ENCODE measurements at regions of chr20 and their contacts with region 1.

Region 1: GRCh38 chr20:4763723-4764510 is 42.2 kb downstream of the PRND start:
- DNase-seq: no peak
- ATAC-seq: no peak
- H3K4me3 Mint-ChIP-seq: no peak overlapping the region
- H3K27ac Mint-ChIP-seq: no peak overlapping the region
- H3K4me1 Mint-ChIP-seq: peaks cover 5% of the 10 kb centered on the region
- H3K27me3 Mint-ChIP-seq: peaks cover 2% of the 10 kb centered on the region

Region 2: DNA sequence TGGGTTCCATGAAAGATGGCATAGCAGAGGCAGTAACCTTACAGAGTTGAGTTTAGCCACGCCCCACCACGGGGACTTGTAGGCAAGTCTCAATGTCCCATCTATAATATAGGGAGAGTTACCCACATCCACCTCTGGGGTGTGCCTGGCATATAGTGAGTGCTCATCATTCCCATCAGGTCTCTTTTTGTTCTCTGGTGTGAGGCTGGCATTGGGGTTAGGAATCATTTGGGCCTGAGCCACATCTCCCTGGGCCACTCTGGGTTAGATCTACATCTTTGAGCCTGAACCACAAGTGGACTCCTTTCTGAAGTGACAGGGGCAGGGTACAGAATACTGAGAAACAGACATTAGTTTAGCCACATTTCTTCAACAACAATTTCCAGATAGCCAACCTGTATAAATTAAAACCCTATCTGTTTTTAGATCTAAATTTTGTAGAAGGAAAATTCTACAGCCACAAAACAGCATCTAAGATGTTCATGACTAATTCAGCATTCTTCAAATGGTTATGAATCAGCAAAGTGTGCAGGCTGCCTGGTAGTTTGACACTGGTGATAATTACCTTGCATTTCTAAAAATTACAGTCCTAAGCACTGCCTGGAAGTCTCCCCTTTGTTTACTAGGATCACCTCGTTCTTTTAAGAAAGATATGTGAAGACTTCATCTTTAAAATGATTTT is 768.7 kb before region 1 on chr20:
- CTCF ChIA-PET with region 1: no interaction called
- POLR2A ChIA-PET with region 1: no interaction called
- intact Hi-C with region 1: no loop called
- DNase-seq: peak; percentile 50
- ATAC-seq: peak; percentile 80
- H3K4me3 Mint-ChIP-seq: no peak overlapping the region
- H3K27ac Mint-ChIP-seq: peak overlapping the region; percentile 68
- H3K4me1 Mint-ChIP-seq: peaks cover 51% of the 10 kb centered on the region
- H3K27me3 Mint-ChIP-seq: no peaks in the 10 kb centered on the region

Region 3: GRCh38 chr20:4573564-4574355 is 190.2 kb before region 1 on chr20:
- CTCF ChIA-PET with region 1: no interaction called
- POLR2A ChIA-PET with region 1: no interaction called
- intact Hi-C with region 1: no loop called
- DNase-seq: no peak
- ATAC-seq: no peak
- H3K4me3 Mint-ChIP-seq: no peak overlapping the region
- H3K27ac Mint-ChIP-seq: no peak overlapping the region
- H3K4me1 Mint-ChIP-seq: no peaks in the 10 kb centered on the region
- H3K27me3 Mint-ChIP-seq: peaks cover 40% of the 10 kb centered on the region

Region 4: DNA sequence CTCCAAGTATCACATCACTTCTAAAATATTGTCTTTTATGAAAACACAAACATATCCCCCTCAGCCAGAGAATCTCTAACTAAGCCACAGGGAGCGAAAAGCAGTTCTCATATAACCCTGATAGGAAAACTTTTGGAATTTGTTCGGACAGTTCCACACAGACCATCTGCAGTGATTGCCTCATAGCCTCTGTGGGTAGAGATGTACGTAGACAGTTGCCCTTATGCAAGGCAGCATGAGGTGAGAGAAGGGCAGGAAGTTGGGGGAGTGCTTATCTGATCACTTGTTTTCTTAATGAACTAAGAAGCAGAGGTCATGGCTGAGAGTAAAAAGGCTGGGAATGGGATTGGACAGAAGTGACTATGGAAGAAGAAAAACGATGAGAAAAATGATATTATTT is 197.8 kb after region 1 on chr20:
- CTCF ChIA-PET with region 1: interaction called, 13 read pairs
- POLR2A ChIA-PET with region 1: no interaction called
- intact Hi-C with region 1: no loop called
- DNase-seq: peak; percentile 38
- ATAC-seq: peak; percentile 81
- H3K4me3 Mint-ChIP-seq: no peak overlapping the region
- H3K27ac Mint-ChIP-seq: peak overlapping the region; percentile 93
- H3K4me1 Mint-ChIP-seq: peaks cover 28% of the 10 kb centered on the region
- H3K27me3 Mint-ChIP-seq: no peaks in the 10 kb centered on the region